Activated B cell treated with CpG ODN at 0.5 μM for 24 hours (primary cell): ENCODE measurements at regions of chr7 and their contacts with region 1.

Region 1: DNA sequence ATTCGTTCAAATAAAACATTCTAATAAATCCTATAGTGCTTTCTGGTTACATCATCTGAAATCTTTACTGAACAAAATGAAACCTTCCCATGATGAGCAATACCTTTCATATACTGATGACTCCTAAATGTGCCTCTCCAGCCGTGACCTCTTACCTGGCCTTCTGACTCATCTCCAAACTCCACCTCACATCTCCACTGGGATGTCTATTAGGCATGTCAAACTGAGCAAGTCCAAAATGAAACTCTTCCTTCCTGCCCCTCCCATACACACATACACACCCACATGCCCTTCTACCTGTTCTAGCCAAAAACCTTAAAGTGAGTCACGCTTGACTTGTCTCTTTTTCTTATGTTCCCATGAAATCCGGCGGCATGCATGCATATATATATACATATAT is 22.9 kb downstream of the GSAP start:
- DNase-seq: no peak
- ATAC-seq: peak; percentile 79
- H3K4me3 Mint-ChIP-seq: peak overlapping the region; percentile 21
- H3K27ac Mint-ChIP-seq: peak overlapping the region; percentile 85
- H3K4me1 Mint-ChIP-seq: peaks cover 48% of the 10 kb centered on the region
- H3K27me3 Mint-ChIP-seq: no peaks in the 10 kb centered on the region
- CTCF ChIP-seq: no peak

Region 2: DNA sequence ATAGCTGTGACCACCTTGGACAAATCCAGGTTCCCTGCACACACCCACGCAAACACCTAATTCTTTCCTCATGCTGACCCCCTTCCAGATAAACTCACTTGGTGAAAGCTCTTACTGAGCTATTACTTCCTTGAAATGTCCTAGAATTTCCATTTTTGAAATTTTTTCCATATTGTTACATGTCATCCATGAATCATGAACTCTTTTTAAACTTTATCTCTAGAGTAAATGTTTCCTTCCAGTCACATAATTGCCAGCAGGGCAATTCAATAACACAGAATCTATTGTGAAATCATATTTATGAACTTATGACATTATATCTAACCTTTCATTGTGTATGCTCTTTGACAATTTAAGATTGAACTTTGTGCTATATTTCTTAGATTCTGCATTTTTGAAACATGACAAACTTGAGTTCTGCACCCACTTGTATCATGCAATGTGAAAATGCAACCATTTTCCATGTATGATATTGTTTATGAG is 166.9 kb before region 1 on chr7:
- CTCF ChIA-PET with region 1: no interaction called
- POLR2A ChIA-PET with region 1: no interaction called
- intact Hi-C with region 1: no loop called
- DNase-seq: no peak
- ATAC-seq: no peak
- H3K4me3 Mint-ChIP-seq: no peak overlapping the region
- H3K27ac Mint-ChIP-seq: no peak overlapping the region
- H3K4me1 Mint-ChIP-seq: no peaks in the 10 kb centered on the region
- H3K27me3 Mint-ChIP-seq: no peaks in the 10 kb centered on the region
- CTCF ChIP-seq: no peak

Region 3: DNA sequence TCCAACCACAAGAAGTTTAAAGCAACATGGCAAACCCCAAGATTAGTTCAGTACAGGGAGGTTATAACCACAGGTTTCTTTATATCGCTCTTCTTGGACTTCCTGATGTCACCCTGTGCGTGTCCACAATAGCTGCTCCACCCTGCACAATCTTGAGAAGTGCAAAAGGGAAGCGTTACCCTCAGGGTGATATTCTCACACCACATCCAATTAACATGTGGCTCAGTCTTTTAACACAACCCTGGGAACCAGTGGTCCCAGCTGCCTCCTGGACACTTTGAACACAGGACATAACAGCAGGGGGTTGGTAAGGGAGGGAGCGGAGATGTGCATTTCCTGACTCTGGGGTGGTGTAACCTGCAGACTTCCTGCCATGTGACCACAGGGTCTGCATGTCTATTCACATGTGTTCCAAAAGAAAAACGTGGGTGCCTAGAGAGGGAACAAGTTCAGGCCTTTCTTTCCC is 41.7 kb before region 1 on chr7:
- CTCF ChIA-PET with region 1: no interaction called
- POLR2A ChIA-PET with region 1: interaction called, 5 read pairs
- intact Hi-C with region 1: loop called (anchors 5 kb)
- DNase-seq: peak; percentile 29
- ATAC-seq: peak; percentile 88
- H3K4me3 Mint-ChIP-seq: peak overlapping the region; percentile 75
- H3K27ac Mint-ChIP-seq: peak overlapping the region; percentile 96
- H3K4me1 Mint-ChIP-seq: peaks cover 41% of the 10 kb centered on the region
- H3K27me3 Mint-ChIP-seq: no peaks in the 10 kb centered on the region
- CTCF ChIP-seq: no peak

Region 4: GRCh38 chr7:77409739-77410547 is 16.7 kb after region 1 on chr7:
- CTCF ChIA-PET with region 1: interaction called, 5 read pairs
- POLR2A ChIA-PET with region 1: interaction called, 144 read pairs
- intact Hi-C with region 1: loop called (anchors 1 kb)
- DNase-seq: no peak
- ATAC-seq: no peak
- H3K4me3 Mint-ChIP-seq: no peak overlapping the region
- H3K27ac Mint-ChIP-seq: peak overlapping the region; percentile 70
- H3K4me1 Mint-ChIP-seq: peaks cover 73% of the 10 kb centered on the region
- H3K27me3 Mint-ChIP-seq: no peaks in the 10 kb centered on the region
- CTCF ChIP-seq: no peak

Region 5: DNA sequence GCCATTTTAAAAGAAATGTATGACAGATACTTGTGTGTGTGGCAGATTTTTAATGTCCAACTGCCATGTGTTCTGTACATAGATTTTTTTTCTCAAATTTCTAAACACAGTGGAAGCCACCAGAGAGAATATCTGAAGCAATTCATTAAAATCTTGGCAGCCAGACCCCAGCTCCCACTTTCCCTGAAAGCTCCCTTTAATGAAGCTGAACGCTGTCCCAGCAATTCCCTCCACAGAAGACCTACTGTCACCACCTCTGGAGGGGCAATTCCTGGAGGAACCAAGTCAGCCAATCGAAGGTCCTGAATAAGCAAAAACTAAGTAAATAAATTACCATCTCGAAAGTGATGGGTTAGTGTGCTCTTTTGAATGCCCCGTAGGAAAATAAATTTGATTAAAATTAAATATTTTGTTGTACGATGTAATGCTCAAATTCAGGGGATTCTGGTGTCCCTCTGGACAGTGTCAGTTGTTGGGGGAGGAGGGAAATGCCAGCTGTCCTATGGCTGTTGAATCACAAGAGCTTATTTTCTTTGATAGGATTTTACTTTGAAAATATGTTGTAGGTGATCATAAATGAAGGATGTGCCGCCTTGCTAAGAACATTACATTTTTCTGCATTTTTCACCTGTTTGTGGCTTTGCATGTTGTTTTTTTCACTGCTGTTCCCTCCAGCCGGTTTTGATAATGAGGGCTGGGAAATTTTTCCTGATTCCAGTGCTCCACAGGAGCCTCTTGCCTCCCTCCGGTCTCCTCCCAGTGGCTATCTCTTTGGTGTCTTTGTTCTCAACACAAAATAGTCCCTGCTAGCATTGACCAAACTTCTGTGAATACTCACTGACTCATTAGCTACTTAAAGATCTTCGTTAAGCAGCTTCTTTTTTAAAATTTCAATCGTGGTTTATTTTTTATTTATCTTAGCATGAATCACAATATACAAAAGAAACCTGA is 32.1 kb after region 1 on chr7:
- CTCF ChIA-PET with region 1: no interaction called
- POLR2A ChIA-PET with region 1: interaction called, 8 read pairs
- intact Hi-C with region 1: loop called (anchors 5 kb)
- DNase-seq: no peak
- ATAC-seq: no peak
- H3K4me3 Mint-ChIP-seq: peak overlapping the region; percentile 59
- H3K27ac Mint-ChIP-seq: peak overlapping the region; percentile 46
- H3K4me1 Mint-ChIP-seq: peaks cover 39% of the 10 kb centered on the region
- H3K27me3 Mint-ChIP-seq: no peaks in the 10 kb centered on the region
- CTCF ChIP-seq: no peak

Region 6: DNA sequence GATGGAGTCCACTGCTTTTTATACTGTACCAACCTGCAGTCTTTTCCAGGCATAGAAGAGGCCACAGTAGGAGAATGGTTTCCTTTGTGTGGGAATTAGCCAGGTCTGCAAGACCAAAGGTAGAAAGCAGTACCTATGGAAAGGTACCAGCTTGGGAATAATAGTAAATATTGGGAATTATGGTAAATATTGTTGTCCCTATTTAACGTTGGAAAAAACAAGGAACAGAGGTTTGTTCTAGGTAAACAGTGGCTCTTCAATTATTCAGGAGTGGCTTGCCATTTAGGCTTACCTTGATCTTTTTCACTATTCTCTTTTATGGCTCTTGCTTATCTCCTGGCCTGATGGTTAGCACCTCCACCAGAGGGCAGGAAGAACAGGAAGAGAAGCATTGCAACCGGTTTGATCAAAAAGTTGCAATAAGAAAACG is 66.8 kb after region 1 on chr7:
- CTCF ChIA-PET with region 1: no interaction called
- POLR2A ChIA-PET with region 1: interaction called, 4 read pairs
- intact Hi-C with region 1: loop called (anchors 1 kb)
- DNase-seq: no peak
- ATAC-seq: no peak
- H3K4me3 Mint-ChIP-seq: no peak overlapping the region
- H3K27ac Mint-ChIP-seq: no peak overlapping the region
- H3K4me1 Mint-ChIP-seq: peaks cover 17% of the 10 kb centered on the region
- H3K27me3 Mint-ChIP-seq: no peaks in the 10 kb centered on the region
- CTCF ChIP-seq: no peak

Region 7: DNA sequence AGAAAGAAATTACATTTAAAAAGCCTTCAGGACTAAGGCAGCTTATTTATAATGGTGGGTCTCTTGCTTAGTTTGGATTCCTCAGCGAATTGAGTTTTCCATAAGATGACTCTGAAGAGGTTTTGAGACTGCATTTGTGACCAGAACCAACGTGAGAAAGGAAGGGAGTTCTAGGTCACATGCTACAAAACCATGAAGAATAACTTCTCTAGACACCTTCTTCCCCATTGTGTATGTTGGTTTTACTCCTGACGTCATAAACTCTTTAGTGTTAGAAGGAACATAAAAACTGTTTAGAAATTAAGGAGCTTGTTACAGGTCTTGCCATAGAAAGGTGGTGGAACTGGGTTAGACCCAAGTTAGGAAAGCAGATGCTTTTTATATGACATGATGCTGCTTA is 154.9 kb after region 1 on chr7:
- CTCF ChIA-PET with region 1: no interaction called
- POLR2A ChIA-PET with region 1: no interaction called
- intact Hi-C with region 1: no loop called
- DNase-seq: no peak
- ATAC-seq: peak; percentile 37
- H3K4me3 Mint-ChIP-seq: no peak overlapping the region
- H3K27ac Mint-ChIP-seq: peak overlapping the region; percentile 31
- H3K4me1 Mint-ChIP-seq: peaks cover 38% of the 10 kb centered on the region
- H3K27me3 Mint-ChIP-seq: no peaks in the 10 kb centered on the region
- CTCF ChIP-seq: no peak